Activated B cell treated with CpG ODN at 0.5 μM for 24 hours (primary cell): ENCODE measurements at regions of chr2 and their contacts with region 1.

Region 1: GRCh38 chr2:119011162-119011909 is 69.3 kb downstream of the MARCO start:
- DNase-seq: no peak
- ATAC-seq: no peak
- H3K4me3 Mint-ChIP-seq: no peak overlapping the region
- H3K27ac Mint-ChIP-seq: no peak overlapping the region
- H3K4me1 Mint-ChIP-seq: no peaks in the 10 kb centered on the region
- H3K27me3 Mint-ChIP-seq: peaks cover 24% of the 10 kb centered on the region
- CTCF ChIP-seq: no peak

Region 2: GRCh38 chr2:118989481-118989880 is 21.9 kb before region 1 on chr2:
- CTCF ChIA-PET with region 1: no interaction called
- POLR2A ChIA-PET with region 1: no interaction called
- intact Hi-C with region 1: no loop called
- DNase-seq: no peak
- ATAC-seq: no peak
- H3K4me3 Mint-ChIP-seq: no peak overlapping the region
- H3K27ac Mint-ChIP-seq: no peak overlapping the region
- H3K4me1 Mint-ChIP-seq: no peaks in the 10 kb centered on the region
- H3K27me3 Mint-ChIP-seq: peaks cover 1% of the 10 kb centered on the region
- CTCF ChIP-seq: no peak

Region 3: DNA sequence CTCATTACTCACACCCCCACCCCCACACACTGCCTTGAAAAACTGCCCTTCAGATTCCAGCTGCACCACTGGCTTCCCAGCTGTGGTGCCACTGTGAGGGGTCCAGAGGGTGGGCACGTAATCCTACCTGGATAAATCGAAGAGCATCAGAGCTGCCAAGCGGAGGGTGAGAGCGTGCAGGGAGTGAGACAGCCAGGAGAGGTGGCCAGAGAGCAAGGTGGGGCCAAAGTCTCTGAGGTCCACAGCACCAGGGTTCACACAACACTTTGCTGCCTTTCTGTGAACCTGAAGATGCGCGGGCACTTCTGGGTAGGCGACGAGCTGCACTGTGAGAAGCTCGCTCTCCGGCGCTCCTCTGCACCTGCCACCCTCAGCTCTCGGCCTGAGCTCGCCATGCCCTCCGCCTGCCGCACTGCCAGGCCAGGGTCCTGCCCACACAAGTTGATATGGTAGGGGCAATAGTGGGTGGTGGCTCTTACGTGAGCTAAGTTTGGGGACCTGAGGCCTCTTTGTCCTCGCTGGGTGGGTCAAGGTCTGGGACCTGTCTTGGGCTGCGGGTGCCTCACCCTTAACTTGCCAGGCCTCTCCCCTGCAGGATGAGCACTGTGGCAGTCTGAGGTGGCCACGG is 14.5 kb after region 1 on chr2:
- CTCF ChIA-PET with region 1: no interaction called
- POLR2A ChIA-PET with region 1: no interaction called
- intact Hi-C with region 1: no loop called
- DNase-seq: no peak
- ATAC-seq: no peak
- H3K4me3 Mint-ChIP-seq: no peak overlapping the region
- H3K27ac Mint-ChIP-seq: no peak overlapping the region
- H3K4me1 Mint-ChIP-seq: no peaks in the 10 kb centered on the region
- H3K27me3 Mint-ChIP-seq: peaks cover 4% of the 10 kb centered on the region
- CTCF ChIP-seq: no peak

Region 4: GRCh38 chr2:119264781-119265692 is 253.7 kb after region 1 on chr2:
- CTCF ChIA-PET with region 1: no interaction called
- POLR2A ChIA-PET with region 1: no interaction called
- intact Hi-C with region 1: loop called (anchors 10 kb)
- DNase-seq: no peak
- ATAC-seq: peak; percentile 56
- H3K4me3 Mint-ChIP-seq: no peak overlapping the region
- H3K27ac Mint-ChIP-seq: no peak overlapping the region
- H3K4me1 Mint-ChIP-seq: no peaks in the 10 kb centered on the region
- H3K27me3 Mint-ChIP-seq: peaks cover 2% of the 10 kb centered on the region
- CTCF ChIP-seq: no peak